ENCODE measurements at regions of chr17 and their contacts with region 1.

Region 1: DNA sequence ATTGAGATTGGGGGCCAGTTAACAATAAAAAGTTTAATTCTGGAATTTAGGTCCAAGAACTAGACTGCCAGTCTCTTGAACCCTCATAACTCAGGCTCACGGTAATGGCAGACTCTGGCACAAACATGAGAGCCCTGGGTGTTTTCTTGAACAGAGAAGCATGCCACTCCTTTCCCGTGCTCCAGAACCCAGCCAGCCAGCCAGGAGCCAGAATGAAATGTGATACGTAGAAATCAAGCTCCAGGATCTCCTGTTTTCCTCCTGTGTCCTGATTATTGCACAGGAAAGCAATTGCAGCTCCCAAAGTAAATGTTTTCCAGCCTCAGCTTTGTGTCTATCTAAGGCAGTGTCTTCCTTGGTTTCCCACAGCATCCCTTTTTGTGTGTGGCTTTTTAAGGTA is 46.2 kb upstream of the NOL11 start:
- DNase-seq: peak in 1 of 2 experiments; percentile 13
- H3K4me3 ChIP-seq: no peak overlapping the region
- H3K27ac ChIP-seq: no peak overlapping the region; the same call in 1 of the 2 replicates
- H3K4me1 ChIP-seq: peaks cover 17% of the 10 kb centered on the region; the same call in 1 of the 2 replicates
- H3K27me3 ChIP-seq: no peaks in the 10 kb centered on the region
- CTCF ChIP-seq: no peak

Region 2: GRCh38 chr17:67575325-67575724 is 96.2 kb before region 1 on chr17:
- CTCF ChIA-PET with region 1: no interaction called
- POLR2A ChIA-PET with region 1: no interaction called
- intact Hi-C with region 1: no loop called
- DNase-seq: no peak
- H3K4me3 ChIP-seq: no peak overlapping the region
- H3K27ac ChIP-seq: no peak overlapping the region
- H3K4me1 ChIP-seq: no peaks in the 10 kb centered on the region
- H3K27me3 ChIP-seq: no peaks in the 10 kb centered on the region
- CTCF ChIP-seq: no peak

Region 3: GRCh38 chr17:67637917-67638641 is 33.4 kb before region 1 on chr17:
- CTCF ChIA-PET with region 1: interaction called, 4 read pairs
- POLR2A ChIA-PET with region 1: no interaction called
- intact Hi-C with region 1: loop called (anchors 5 kb)
- DNase-seq: peak; percentile 88 to 98
- H3K4me3 ChIP-seq: peak overlapping the region; percentile 32; the same call in 1 of the 2 replicates
- H3K27ac ChIP-seq: peak overlapping the region; percentile 81
- H3K4me1 ChIP-seq: peaks cover 37% of the 10 kb centered on the region
- H3K27me3 ChIP-seq: no peaks in the 10 kb centered on the region
- CTCF ChIP-seq: no peak

Measured in PC-9 (cell line).